ENCODE measurements at regions of chr2 and their contacts with region 1.

Region 1: DNA sequence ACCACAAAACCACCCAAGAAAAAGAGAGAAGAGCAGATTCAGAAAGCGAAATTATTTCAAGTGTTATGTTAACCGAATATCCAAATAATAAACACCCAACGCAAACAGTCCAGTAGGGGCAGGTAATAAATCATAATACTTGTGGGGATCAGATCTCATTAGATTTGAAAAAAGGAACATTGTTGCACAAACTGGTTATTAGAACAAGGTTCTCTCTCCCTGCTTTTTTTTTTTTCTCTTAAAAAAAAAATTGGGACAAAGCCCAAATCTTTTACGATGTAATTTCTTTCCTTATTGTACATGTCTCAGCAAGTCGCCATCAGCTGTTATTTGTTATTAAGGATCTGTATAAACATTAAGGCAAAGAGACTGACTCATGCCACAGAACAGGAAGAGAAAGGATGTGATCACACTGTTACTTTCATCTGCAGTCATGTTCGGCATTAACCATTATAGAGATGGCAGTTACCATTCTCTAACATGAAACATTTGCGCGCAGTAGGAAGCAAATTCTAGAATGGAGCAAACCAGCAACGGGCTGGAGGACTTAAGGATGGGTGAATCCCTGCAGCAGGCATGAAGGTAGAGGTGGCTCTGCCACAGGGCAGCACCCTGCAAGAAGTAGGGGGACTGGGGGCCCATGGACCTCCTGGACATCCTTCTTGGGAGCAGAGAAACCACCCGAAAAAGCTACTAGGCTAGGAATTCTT is 42.0 kb downstream of the EPHA4 start:
- DNase-seq: peak in 4 of 14 experiments; percentile 21 to 54 (median 50)
- ATAC-seq: peak; percentile 74
- H3K4me3 ChIP-seq: peak overlapping the region; percentile 31
- H3K4me3 Mint-ChIP-seq: peak overlapping the region; percentile 47
- H3K27ac ChIP-seq: peak overlapping the region; percentile 8 to 65
- H3K27ac Mint-ChIP-seq: peak overlapping the region; percentile 91
- H3K4me1 ChIP-seq: peaks cover 48% of the 10 kb centered on the region
- H3K4me1 Mint-ChIP-seq: peaks cover 80% of the 10 kb centered on the region
- H3K27me3 ChIP-seq: no peaks in the 10 kb centered on the region
- H3K27me3 Mint-ChIP-seq: no peaks in the 10 kb centered on the region
- CTCF ChIP-seq: no peak

Region 2: DNA sequence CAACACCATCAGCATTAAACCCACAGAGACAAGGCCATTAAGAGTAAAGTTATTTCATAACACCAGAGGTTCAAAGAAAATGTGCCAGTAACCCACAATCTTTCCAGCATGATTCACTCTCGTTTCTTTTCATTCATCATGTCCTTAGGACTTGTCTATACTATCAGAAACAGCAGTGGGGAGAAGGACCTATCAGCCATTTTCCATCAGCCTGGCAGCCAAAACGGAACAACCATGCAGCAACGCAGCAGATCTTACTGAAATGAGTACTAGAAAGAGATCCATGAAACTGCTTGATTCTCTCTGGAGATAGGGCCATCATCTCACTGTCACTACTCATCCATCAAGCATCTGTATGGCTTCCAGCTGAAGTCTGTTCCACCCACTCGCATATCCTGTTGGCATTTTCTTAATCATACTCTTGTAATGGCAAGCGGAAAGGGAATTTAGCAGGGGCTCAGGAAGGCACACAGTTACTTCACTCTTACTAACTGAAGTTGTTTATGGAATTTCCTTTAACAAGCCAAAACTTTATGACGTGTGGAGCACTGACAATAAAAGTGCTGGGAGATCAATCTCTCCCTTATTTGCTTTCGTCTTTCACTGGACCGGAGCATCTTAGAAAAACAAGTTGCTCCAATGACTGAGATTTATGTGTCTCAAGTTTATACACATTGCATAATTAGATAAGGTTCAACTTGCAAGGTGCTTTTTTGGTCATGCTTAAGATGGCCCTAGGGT is 27.7 kb before region 1 on chr2:
- CTCF ChIA-PET with region 1: no interaction called
- POLR2A ChIA-PET with region 1: interaction called, 10 read pairs
- intact Hi-C with region 1: no loop called
- DNase-seq: no peak
- ATAC-seq: no peak
- H3K4me3 ChIP-seq: no peak overlapping the region
- H3K4me3 Mint-ChIP-seq: no peak overlapping the region
- H3K27ac ChIP-seq: no peak overlapping the region
- H3K27ac Mint-ChIP-seq: no peak overlapping the region
- H3K4me1 ChIP-seq: peaks cover 4% of the 10 kb centered on the region
- H3K4me1 Mint-ChIP-seq: peaks cover 36% of the 10 kb centered on the region
- H3K27me3 ChIP-seq: no peaks in the 10 kb centered on the region
- H3K27me3 Mint-ChIP-seq: no peaks in the 10 kb centered on the region
- CTCF ChIP-seq: no peak